ENCODE measurements at regions of chr18 and their contacts with region 1.

Region 1: GRCh38 chr18:49858309-49859020 is 45.1 kb upstream of the ACAA2 start:
- H3K4me3 ChIP-seq: no peak overlapping the region
- H3K27ac ChIP-seq: no peak overlapping the region
- H3K4me1 ChIP-seq: peaks cover 4% of the 10 kb centered on the region
- CTCF ChIP-seq: peak; percentile 88

Region 2: GRCh38 chr18:49486953-49487710 is 371.3 kb before region 1 on chr18 and contains the start of gene C18orf32:
- CTCF ChIA-PET with region 1: interaction called, 12 read pairs
- POLR2A ChIA-PET with region 1: interaction called, 7 read pairs
- H3K4me3 ChIP-seq: peak within 1 kb of the TSS; percentile 70
- H3K27ac ChIP-seq: peak within 1 kb of the TSS; percentile 88
- H3K4me1 ChIP-seq: peaks cover 22% of the 10 kb centered on the region
- CTCF ChIP-seq: peak; percentile 64

Region 3: DNA sequence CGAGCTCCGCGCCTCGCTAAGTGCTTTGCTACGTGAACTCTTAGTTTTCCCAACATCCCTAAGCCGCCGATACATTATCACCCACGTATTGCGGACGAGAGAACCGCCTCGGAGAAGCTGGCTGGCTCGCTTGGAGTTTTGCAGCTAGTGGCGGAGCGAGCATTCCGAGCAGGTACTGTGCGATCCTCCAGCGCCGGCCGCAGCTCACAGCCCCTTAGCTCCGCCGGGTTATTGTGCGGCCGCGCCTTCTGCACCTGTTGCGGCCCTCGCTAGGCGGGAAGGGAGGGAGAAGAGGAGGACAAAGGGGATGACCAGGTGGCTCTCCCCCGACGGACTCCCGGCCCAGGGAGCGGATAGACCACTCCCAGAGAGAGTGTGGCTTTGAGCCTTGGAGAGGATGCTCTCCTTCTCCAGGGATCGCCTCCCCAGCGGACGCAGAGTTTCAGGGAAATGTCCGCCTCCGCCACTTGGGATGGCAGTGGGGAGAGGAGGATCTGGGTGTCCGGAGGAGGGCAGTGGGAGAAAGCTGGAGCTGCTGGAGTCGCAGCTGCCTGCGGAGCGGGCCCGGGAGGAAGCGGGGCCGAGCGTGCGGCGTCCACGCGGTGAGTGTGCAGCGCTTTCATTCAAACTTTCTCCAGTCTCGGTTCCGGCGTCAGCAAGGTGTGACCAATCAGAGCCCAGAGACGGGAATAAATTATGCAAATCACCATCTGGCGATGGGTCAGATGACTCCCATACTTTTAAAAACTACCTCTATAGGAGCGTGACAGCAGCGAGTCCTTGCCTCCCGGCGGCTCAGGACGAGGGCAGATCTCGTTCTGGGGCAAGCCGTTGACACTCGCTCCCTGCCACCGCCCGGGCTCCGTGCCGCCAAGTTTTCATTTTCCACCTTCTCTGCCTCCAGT is 296.9 kb before region 1 on chr18 and contains the start of gene LIPG:
- CTCF ChIA-PET with region 1: interaction called, 34 read pairs
- POLR2A ChIA-PET with region 1: no interaction called
- H3K4me3 ChIP-seq: peak within 1 kb of the TSS; percentile 23
- H3K27ac ChIP-seq: peak within 1 kb of the TSS; percentile 64; the same call in 1 of the 2 replicates
- H3K4me1 ChIP-seq: peaks cover 9% of the 10 kb centered on the region; the same call in 1 of the 2 replicates
- CTCF ChIP-seq: peak; percentile 50

Region 4: DNA sequence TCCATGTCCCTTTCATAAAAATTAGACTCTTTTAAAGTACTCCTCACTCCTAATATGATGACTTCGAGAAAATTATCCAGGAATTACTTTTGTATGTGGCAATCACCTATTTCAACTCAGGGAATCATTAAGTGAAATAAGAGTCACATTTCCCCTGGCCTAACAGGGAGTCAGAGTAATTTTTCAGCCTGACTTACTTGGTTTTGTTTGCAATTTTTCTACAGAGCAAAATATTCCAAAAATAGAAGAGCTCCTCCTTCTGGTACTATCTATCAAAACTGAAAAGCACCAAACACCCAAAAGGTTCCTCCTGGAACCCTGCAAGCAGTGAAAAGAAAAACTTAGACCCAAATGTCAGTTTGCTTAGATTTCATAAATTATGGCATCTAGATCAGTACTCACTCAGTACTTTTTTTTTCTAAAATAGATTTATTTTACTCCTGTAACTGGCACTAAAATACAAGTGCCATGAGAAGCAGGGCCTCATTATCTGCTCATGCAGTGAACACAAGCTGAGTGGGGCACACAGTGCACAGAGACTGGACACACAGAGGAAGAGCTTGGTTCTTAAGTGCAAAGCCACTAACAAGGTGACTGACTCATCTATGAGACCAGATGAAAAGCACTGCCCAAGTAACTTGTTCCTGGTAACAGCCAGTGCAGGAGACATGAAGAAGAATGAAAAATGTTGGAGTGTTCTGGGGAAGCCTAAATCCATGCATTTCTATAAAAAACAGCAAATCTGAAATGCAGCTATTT is 73.9 kb before region 1 on chr18:
- CTCF ChIA-PET with region 1: interaction called, 13 read pairs
- POLR2A ChIA-PET with region 1: no interaction called
- H3K4me3 ChIP-seq: no peak overlapping the region
- H3K27ac ChIP-seq: no peak overlapping the region
- H3K4me1 ChIP-seq: no peaks in the 10 kb centered on the region
- CTCF ChIP-seq: no peak

Region 5: GRCh38 chr18:50079581-50080295 is 221.3 kb after region 1 on chr18:
- CTCF ChIA-PET with region 1: no interaction called
- POLR2A ChIA-PET with region 1: no interaction called
- H3K4me3 ChIP-seq: no peak overlapping the region
- H3K27ac ChIP-seq: no peak overlapping the region
- H3K4me1 ChIP-seq: no peaks in the 10 kb centered on the region
- CTCF ChIP-seq: no peak

Region 6: DNA sequence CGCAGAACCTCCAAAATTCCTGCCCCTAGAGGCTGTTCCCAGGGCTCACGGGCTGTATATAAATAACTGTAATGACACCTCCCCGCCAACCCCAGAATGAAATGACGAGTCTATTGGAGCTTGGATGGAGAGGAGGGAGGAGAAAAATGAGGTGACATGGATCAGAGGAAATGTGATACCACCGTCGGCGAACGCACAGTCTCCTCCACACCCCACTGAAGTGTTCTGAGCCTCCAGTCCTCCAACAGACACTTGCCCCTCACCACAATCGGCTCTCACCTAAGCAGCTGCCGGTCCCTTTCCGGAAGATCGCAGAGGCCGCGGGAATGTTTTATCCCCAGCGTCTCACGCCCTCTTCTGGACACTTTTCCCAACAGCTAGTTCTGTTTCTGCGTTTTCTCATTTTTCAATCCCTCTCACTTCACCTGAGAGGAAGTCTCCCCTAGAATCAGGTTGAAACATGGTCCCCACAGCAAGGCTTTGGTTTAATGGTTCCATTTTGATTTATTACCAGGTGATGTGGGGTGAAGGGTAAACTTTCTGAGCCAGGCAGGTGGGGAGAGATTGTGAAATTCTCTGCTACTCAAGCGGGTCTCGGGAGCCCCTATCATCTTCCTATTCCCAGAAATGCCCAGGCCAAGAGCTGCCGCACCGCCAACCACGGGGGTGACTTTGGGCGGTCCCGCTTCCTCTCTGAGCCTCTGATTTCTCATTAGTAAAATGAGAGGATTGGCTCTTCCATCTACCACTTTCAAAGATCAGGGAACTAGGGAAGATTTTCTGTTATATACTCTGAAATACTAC is 345.5 kb after region 1 on chr18:
- CTCF ChIA-PET with region 1: interaction called, 30 read pairs
- POLR2A ChIA-PET with region 1: no interaction called
- H3K4me3 ChIP-seq: no peak overlapping the region
- H3K27ac ChIP-seq: no peak overlapping the region
- H3K4me1 ChIP-seq: no peaks in the 10 kb centered on the region
- CTCF ChIP-seq: peak; percentile 83

Region 7: DNA sequence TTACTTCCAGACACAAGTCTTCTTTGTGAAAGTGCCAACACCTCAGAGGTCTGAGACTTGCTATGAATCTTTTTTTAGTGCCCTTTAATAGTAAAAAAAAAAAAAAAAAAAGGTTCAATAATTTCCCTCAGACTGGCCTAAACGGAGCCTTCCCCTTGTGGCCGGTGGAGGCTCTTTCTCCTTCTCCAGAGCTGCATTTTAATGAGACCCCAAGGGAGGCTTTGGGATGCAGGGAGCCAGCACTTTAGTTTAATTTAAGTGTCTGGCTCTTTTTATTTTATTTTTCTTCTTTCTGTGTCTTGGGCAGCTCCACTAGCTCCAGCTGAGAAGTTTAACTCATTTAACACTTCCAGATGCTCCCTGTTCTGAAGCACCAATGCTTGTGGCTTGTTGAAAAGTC is 633.6 kb after region 1 on chr18:
- CTCF ChIA-PET with region 1: no interaction called
- POLR2A ChIA-PET with region 1: no interaction called
- H3K4me3 ChIP-seq: no peak overlapping the region
- H3K27ac ChIP-seq: no peak overlapping the region
- H3K4me1 ChIP-seq: no peaks in the 10 kb centered on the region
- CTCF ChIP-seq: no peak

Region 8: DNA sequence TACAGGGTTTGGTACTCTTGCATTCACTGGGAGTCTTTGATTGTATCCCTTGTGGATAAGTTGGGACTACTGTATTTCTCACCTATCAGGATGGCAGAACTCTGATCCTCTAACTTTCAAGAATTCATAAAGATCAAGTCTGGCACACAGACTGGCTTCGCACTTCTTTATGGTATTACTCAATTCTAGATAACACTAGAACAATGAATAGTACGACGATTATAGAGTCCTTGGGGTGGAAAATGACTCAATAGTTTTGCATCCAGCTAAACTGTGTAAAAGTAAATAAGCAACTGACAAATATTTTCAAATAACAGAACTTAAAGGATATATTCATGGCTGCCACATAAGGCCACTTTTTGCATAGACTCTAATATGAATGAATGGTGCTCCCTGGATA is 1442.4 kb after region 1 on chr18:
- CTCF ChIA-PET with region 1: no interaction called
- POLR2A ChIA-PET with region 1: no interaction called
- H3K4me3 ChIP-seq: no peak overlapping the region
- H3K27ac ChIP-seq: no peak overlapping the region
- H3K4me1 ChIP-seq: no peaks in the 10 kb centered on the region
- CTCF ChIP-seq: no peak

Measured in HEK293 (cell line).